Posterior vena cava (tissue), 2 donors: ENCODE measurements at regions of chr4 and their contacts with region 1.

Region 1: GRCh38 chr4:134045411-134045810 is 156.2 kb downstream of the PABPC4L start:
- DNase-seq: no peak

Region 2: DNA sequence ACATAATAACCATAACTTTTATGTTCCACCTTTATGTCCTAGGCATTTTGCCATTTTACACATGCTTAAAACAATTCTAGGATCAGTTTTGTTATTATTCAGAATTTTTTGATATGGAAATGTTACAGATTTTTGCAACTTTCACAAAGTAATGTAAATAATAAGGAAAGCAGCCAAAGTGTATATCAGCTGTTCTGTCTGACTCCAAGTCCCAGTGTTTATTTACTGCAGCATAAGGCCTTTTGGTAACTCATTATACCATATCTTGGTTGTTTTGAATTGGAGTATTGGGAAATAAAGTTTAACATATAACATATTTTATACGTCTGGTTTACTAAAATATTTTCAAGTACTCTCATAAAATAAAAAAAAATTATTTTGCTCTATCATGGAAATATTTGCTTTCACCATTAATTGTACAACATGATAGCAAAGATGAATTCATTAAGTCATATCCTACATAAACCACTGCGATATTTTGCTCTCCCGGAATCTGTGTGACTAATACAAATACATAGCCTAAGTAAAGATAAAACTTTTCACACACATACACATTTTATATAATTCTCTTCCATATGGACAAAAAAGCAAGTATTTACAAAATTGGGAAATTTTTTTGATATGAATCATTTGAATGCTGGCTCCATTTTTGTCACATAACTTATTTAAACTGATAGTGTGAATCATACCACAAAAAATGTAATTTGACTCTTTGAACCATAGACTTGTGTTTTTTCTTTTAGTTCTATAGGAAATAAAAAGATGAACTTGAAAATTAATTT is 242.9 kb before region 1 on chr4:
- intact Hi-C with region 1: no loop called
- DNase-seq: no peak

Region 3: DNA sequence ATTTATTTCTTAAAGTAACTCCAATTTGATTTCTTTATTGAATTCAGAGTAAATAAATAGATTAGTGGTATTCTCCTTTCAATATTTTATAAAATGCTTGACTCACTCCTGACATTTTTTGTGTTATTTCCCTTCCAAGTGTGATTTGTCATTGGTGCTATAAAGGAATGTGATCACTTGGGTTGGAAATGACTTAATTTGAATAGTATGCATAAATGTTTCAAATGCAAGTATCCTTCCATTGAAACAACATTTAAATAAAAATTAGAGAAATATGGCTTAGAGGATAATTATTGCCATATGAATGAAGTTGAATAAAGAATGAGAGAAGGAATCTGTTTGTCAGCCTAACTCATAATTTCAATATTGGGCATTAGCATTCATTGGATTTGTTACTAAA is 26.6 kb before region 1 on chr4:
- intact Hi-C with region 1: loop called in 1 of 2 experiments (anchors 2 kb)
- DNase-seq: no peak